ENCODE measurements at regions of chr12 and their contacts with region 1.

Region 1: DNA sequence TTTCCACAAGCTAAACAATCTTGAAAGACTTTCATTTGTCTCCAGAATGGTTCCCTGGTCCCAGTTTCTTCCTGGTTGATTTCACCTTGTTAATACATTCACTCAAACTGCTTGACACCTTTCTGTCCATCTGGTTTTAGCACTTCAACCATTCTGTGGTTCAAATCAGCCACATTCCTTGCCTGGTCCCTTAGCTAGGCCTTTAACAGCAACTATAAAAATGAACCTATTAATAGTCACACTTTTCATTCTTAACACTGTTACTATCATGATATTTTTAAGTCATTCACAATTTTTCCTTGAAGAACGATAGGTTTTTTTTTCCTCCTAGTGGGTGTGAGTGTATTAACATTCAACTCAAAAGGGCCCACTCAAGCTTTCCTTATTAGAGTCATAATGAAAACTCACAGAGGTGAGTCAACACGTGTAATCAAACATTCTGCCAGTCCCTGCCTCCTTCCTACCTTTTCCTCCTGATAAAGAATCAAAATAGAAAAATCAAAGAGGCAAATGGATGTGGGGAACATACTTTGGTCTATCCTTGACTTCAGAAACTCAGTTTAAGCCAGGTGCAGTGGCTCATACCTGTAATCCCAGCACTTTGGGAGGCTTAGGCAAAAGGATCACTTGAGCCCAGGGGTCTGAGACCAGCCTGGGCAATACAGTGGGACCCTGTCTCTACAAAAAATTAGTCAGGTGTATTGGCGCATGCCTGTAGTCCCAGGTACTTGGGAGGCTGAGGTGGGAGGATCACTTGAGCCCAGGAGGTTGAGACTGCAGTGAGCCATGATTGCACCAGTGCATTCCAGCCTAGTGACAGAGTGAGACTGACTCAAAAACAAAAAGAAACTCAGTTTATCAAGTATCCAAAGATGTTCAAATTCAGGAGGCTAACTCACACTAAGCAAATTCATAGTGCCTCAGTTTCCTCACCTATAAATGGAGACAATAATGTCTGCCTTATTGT is 34.5 kb upstream of the CCNT1 start:
- DNase-seq: peak in 1 of 2 donors; percentile 34
- H3K4me3 ChIP-seq: no peak overlapping the region
- H3K27ac ChIP-seq: peak overlapping the region; percentile 13 to 73 (median 64)
- H3K4me1 ChIP-seq: peaks cover 0 to 18% (median 2%) of the 10 kb centered on the region in 4 donors
- H3K27me3 ChIP-seq: no peaks in the 10 kb centered on the region
- CTCF ChIP-seq: no peak
- EP300 ChIP-seq: no peak
- POLR2A ChIP-seq: no peak

Region 2: GRCh38 chr12:48631057-48631456 is 120.0 kb before region 1 on chr12:
- intact Hi-C with region 1: no loop called
- DNase-seq: no peak
- H3K4me3 ChIP-seq: no peak overlapping the region
- H3K27ac ChIP-seq: no peak overlapping the region
- H3K4me1 ChIP-seq: no peaks in the 10 kb centered on the region
- H3K27me3 ChIP-seq: peaks cover 0 to 16% (median 0%) of the 10 kb centered on the region in 3 donors
- CTCF ChIP-seq: no peak
- EP300 ChIP-seq: no peak
- POLR2A ChIP-seq: no peak

Region 3: DNA sequence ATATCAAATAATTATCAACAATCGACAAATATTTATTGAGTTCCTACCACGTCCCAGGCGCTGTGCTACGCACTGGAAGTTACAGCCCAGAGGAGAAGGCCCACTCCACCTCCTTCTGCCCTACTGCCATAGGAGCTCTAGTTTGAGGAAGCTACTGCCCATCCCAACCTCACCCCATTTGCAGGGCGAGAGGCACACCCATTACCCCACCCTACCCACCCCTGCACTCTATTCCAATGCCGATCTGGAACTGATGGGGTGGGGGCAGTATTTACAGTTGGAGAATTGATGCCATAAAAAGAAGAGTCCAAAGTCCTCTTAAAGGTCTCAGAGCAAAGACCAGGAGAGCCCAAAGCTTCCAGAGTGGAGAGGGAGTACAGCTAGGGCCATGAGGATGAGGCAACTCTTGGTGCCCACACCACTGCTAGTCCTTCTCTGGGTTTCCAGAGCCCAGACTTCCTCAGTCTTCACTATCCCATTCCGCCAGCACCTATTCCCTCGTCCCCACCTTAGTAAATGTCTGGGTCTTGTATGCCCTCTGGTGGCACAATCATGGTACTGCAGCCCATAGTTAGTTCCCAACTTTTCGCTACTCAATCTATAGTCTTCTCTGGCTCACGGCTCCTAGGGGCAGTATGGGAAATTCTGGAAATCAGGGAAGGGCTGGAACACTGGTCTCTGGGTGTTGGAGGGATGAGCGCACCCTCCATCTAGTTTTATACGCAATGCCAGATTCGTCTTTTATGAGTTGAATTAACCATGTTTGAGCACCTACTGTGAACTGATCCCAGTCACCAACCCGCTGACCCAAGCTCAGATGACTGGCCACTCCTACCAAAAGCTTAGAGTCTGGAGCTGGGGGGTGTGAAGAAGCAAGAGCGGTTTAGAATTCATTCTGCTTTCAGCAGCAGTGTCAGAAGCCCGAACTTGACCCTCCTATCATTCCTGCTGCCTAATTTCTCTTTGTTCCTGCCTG is 44.7 kb after region 1 on chr12:
- intact Hi-C with region 1: loop called (anchors 5 kb)
- DNase-seq: peak; percentile 84 to 92
- H3K4me3 ChIP-seq: no peak overlapping the region
- H3K27ac ChIP-seq: peak overlapping the region; percentile 11 to 54 (median 32)
- H3K4me1 ChIP-seq: peaks cover 0 to 16% (median 11%) of the 10 kb centered on the region in 4 donors
- H3K27me3 ChIP-seq: peaks cover 0 to 10% (median 8%) of the 10 kb centered on the region in 3 donors
- CTCF ChIP-seq: peak in 6 of 7 experiments; percentile 94 to 100 (median 98)
- EP300 ChIP-seq: no peak
- POLR2A ChIP-seq: no peak